ENCODE measurements at regions of chr20 and their contacts with region 1.

Region 1: GRCh38 chr20:2688041-2688591 is 4.5 kb upstream of the EBF4 start:
- DNase-seq: peak; percentile 60 to 77 (median 64)
- ATAC-seq: peak; percentile 95
- H3K4me3 ChIP-seq: no peak overlapping the region; the same call in 1 of the 2 replicates
- H3K27ac ChIP-seq: no peak overlapping the region
- H3K4me1 ChIP-seq: peaks cover 0 to 9% of the 10 kb centered on the region in 2 experiments; a peak in 3 of 5 replicates
- H3K27me3 ChIP-seq: peaks cover 6 to 28% of the 10 kb centered on the region in 2 experiments; a peak in 4 of 5 replicates
- CTCF ChIP-seq: peak; percentile 83 to 89 (median 84)
- EP300 ChIP-seq: no peak
- POLR2A ChIP-seq: no peak
- RAD21 ChIP-seq: peak; percentile 65 to 80

Region 2: DNA sequence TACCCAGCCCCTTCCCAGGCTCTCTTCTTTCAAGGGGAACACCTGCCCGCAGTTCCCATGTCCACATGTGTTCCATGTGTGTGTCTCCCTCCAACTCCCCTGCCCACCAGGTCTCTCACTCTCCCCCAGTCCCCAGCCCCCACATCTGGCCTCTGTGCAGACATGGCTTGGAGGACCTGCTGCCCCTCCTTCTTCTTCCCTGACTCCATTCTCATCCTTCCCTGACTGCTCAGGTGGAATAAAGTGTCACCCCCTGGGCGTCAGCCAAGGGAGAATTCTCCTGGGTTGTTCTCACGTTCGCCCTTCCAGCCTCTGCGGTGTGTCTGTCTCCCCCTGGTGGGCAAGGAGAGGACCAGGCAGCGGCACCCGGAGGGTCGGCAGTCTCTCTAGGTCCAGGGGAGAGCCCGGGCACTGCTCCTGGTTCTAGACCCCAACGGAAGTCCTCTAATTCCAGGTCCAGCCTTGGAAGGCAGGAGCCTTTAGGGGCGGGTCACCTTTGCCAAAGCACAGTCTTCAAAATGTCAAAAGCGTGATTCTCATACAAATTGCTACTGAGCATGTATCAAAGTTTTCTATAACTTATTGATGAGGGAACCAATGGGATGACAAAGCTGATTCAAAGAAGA is 54.9 kb after region 1 on chr20:
- CTCF ChIA-PET with region 1: interaction called, 4 read pairs
- POLR2A ChIA-PET with region 1: interaction called, 3 read pairs
- in situ Hi-C with region 1: no loop called
- intact Hi-C with region 1: loop called (anchors 1 kb)
- DNase-seq: peak; percentile 65 to 70 (median 68)
- ATAC-seq: peak; percentile 93
- H3K4me3 ChIP-seq: no peak overlapping the region
- H3K27ac ChIP-seq: no peak overlapping the region
- H3K4me1 ChIP-seq: no peaks in the 10 kb centered on the region
- H3K27me3 ChIP-seq: peaks cover 3 to 48% of the 10 kb centered on the region in 2 experiments
- CTCF ChIP-seq: peak; percentile 74 to 84 (median 83)
- EP300 ChIP-seq: no peak
- POLR2A ChIP-seq: no peak
- RAD21 ChIP-seq: peak in 1 of 2 experiments; percentile 59; a peak in 2 of 4 replicates

Region 3: GRCh38 chr20:2851086-2851485 is 163.0 kb after region 1 on chr20:
- CTCF ChIA-PET with region 1: no interaction called
- POLR2A ChIA-PET with region 1: no interaction called
- in situ Hi-C with region 1: loop called (anchors 5 kb)
- intact Hi-C with region 1: loop called (anchors 5 kb)
- DNase-seq: no peak
- ATAC-seq: no peak
- H3K4me3 ChIP-seq: no peak overlapping the region
- H3K27ac ChIP-seq: no peak overlapping the region
- H3K4me1 ChIP-seq: peaks cover 2 to 3% of the 10 kb centered on the region in 2 experiments; a peak in 2 of 5 replicates
- H3K27me3 ChIP-seq: no peaks in the 10 kb centered on the region
- CTCF ChIP-seq: no peak
- EP300 ChIP-seq: no peak
- POLR2A ChIP-seq: no peak
- RAD21 ChIP-seq: no peak